ENCODE measurements at regions of chr18 and their contacts with region 1.

Region 1: GRCh38 chr18:21004726-21005125 is 106.9 kb downstream of the ROCK1 start:
- DNase-seq: no peak
- H3K4me3 ChIP-seq: no peak overlapping the region
- H3K27ac ChIP-seq: peak overlapping the region; percentile 7 to 66 (median 44)
- H3K4me1 ChIP-seq: peaks cover 0 to 17% (median 12%) of the 10 kb centered on the region in 4 donors
- H3K27me3 ChIP-seq: no peaks in the 10 kb centered on the region
- CTCF ChIP-seq: no peak
- EP300 ChIP-seq: no peak
- POLR2A ChIP-seq: no peak

Region 2: DNA sequence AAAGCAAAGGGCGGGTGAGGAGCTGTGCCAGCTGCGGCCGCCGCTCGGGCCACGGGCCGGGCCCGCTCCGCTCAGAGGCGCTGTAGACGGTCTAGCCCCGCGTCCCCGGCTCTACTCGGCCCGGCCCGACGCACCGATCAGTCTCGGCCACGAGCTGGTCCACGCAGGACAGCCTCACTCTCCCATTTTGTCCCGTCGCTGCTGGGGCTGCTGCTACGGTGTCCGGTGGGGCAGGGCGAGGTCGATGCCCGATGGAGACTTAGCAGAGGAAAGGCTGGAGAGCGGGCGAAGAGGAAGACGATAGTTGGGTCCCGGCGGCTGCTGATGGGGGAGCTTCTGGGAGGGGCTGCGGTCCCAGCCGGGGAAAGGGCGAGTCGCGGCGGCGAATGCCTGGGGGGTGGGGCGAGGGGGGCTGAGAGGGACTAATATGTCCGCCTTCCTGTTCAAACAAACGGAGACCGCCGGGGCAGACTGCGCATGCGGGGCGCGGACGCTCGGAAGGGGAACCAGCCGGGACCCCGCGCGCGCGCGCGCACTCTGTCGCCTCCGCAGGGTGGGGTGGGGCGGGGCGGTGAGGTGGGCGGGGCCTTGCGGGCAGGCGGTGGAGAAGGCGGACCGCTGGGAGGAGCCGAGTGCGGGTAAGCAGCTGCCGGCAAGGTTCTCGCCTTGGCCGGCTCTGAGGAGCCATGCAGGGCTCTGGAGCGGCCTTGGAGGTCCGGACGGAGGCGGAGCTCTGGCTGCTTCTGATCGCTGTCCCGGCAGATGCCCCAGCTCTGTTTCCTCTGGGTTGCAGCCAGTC is 106.8 kb after region 1 on chr18 and contains the start of gene ROCK1:
- intact Hi-C with region 1: loop called (anchors 5 kb)
- DNase-seq: peak; percentile 99
- H3K4me3 ChIP-seq: peak within 1 kb of the TSS; percentile 70 to 98 (median 86)
- H3K27ac ChIP-seq: peak within 1 kb of the TSS; percentile 93 to 99 (median 96)
- H3K4me1 ChIP-seq: peaks cover 0 to 47% (median 33%) of the 10 kb centered on the region in 4 donors
- H3K27me3 ChIP-seq: no peaks in the 10 kb centered on the region
- CTCF ChIP-seq: no peak
- EP300 ChIP-seq: no peak
- POLR2A ChIP-seq: peak in 1 of 2 donors; percentile 34
- total RNA-seq, gene ROCK1: 55.8 to 86.7 (median 57.7) TPM

Measured in sigmoid colon (tissue), 7 donors.